Heart left ventricle (tissue), 16 donors: ENCODE measurements at regions of chr4 and their contacts with region 1.

Region 1: GRCh38 chr4:64533637-64534036 is 124.4 kb upstream of the TECRL start:
- DNase-seq: no peak
- ATAC-seq: peak in 2 of 4 donors; percentile 24 to 44
- H3K4me3 ChIP-seq: peak overlapping the region in 3 of 12 donors; percentile 17 to 31 (median 26)
- H3K27ac ChIP-seq: peak overlapping the region in 8 of 12 donors; percentile 19 to 59 (median 44)
- H3K4me1 ChIP-seq: peaks cover 0 to 3% (median 0%) of the 10 kb centered on the region in 12 donors
- H3K27me3 ChIP-seq: no peaks in the 10 kb centered on the region
- CTCF ChIP-seq: no peak
- POLR2A ChIP-seq: no peak

Region 2: GRCh38 chr4:64399313-64400109 is 134.1 kb before region 1 on chr4:
- intact Hi-C with region 1: loop called in 2 of 10 experiments (anchors 5 to 10 kb)
- DNase-seq: no peak
- ATAC-seq: peak in 2 of 4 donors; percentile 21 to 64
- H3K4me3 ChIP-seq: no peak overlapping the region
- H3K27ac ChIP-seq: peak overlapping the region in 3 of 12 donors; percentile 4 to 30 (median 26)
- H3K4me1 ChIP-seq: peaks cover 0 to 9% (median 0%) of the 10 kb centered on the region in 12 donors
- H3K27me3 ChIP-seq: no peaks in the 10 kb centered on the region
- CTCF ChIP-seq: no peak
- POLR2A ChIP-seq: no peak

Region 3: GRCh38 chr4:65175585-65175984 is 641.9 kb after region 1 on chr4:
- intact Hi-C with region 1: no loop called
- DNase-seq: no peak
- ATAC-seq: no peak
- H3K4me3 ChIP-seq: no peak overlapping the region
- H3K27ac ChIP-seq: no peak overlapping the region
- H3K4me1 ChIP-seq: no peaks in the 10 kb centered on the region
- H3K27me3 ChIP-seq: no peaks in the 10 kb centered on the region
- CTCF ChIP-seq: no peak
- POLR2A ChIP-seq: no peak